HepG2 (cell line): ENCODE measurements at regions of chr11 and their contacts with region 1.

Region 1: GRCh38 chr11:62025487-62026105 is 58.2 kb upstream of the FTH1 start:
- DNase-seq: peak; percentile 87
- ATAC-seq: peak; percentile 88
- H3K4me3 ChIP-seq: peak overlapping the region; percentile 15 to 53 (median 38); a peak in 5 of 6 replicates
- H3K27ac ChIP-seq: peak overlapping the region; percentile 66
- H3K4me1 ChIP-seq: peaks cover 47% of the 10 kb centered on the region
- H3K27me3 ChIP-seq: no peaks in the 10 kb centered on the region
- CTCF ChIP-seq: no peak
- EP300 ChIP-seq: peak; percentile 60 to 67; a peak in 3 of 4 replicates
- POLR2A ChIP-seq: no peak
- RAD21 ChIP-seq: no peak

Region 2: DNA sequence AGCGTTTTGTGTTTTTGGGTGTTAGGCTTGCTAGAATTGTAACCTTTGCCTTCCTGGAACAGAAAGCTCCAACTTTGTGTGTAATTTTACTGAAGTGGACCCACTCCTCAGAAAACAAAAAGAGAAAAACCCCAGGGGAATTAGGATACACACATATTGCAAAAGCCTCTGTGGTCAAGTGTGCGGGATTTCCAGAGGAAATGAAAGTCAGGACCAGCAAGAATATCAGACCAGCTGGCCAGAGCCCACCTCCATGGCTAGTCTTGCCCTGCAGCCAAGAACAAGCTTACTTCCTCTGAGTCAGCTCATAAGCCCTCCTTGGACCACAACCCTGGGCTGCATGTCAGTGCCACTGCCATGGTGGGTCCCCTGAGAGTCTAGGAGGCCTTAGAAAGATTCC is 21.1 kb before region 1 on chr11:
- CTCF ChIA-PET with region 1: interaction called, 4 read pairs
- POLR2A ChIA-PET with region 1: interaction called, 24 read pairs
- in situ Hi-C with region 1: no loop called
- intact Hi-C with region 1: no loop called
- DNase-seq: no peak
- ATAC-seq: no peak
- H3K4me3 ChIP-seq: no peak overlapping the region
- H3K27ac ChIP-seq: peak overlapping the region; percentile 26
- H3K4me1 ChIP-seq: peaks cover 67% of the 10 kb centered on the region
- H3K27me3 ChIP-seq: no peaks in the 10 kb centered on the region
- CTCF ChIP-seq: no peak
- EP300 ChIP-seq: no peak
- POLR2A ChIP-seq: no peak
- RAD21 ChIP-seq: no peak

Region 3: DNA sequence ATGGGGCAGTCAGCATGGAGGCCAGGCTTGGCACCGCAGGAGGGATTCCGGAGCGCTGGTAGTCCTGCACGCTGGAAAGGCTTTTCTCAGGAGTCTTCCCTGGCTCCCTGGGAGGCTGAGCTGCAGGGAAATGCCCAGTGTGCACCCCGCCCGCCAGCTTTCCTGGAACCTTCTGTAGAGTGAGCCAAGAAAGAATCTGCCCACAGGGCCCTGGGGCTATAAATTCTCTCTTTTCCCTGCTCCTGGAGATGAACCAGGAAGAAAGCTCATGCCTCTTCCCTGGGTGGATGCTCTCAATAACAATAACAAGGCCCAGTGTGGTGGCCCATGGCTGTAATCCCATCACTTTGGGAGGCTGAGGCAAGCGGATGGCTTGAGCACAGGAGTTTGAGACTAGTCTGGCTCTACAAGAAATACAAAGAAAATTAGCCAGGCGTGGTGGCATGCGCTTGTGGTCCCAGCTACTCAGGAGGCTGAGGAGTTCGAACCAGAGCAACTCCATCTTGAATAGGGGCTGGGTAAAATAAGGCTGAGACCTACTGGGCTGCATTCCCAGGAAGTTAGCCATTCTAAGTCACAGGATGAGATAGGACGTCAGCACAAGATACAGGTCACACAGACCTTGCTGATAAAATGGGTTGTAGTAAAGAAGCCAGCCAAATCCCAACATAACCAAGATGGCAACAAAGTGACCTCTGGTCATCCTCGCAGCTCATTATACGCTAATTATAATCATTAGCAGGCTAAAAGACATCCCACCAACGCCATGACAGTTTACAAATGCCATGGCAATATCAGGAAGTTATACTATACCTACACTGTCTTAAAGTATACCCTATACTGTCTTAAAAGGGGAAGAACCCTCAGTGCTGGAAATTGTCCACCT is 11.8 kb before region 1 on chr11:
- CTCF ChIA-PET with region 1: no interaction called
- POLR2A ChIA-PET with region 1: interaction called, 10 read pairs
- in situ Hi-C with region 1: no loop called
- intact Hi-C with region 1: no loop called
- DNase-seq: no peak
- ATAC-seq: no peak
- H3K4me3 ChIP-seq: no peak overlapping the region
- H3K27ac ChIP-seq: no peak overlapping the region
- H3K4me1 ChIP-seq: peaks cover 74% of the 10 kb centered on the region
- H3K27me3 ChIP-seq: no peaks in the 10 kb centered on the region
- CTCF ChIP-seq: no peak
- EP300 ChIP-seq: no peak
- POLR2A ChIP-seq: no peak
- RAD21 ChIP-seq: no peak

Region 4: DNA sequence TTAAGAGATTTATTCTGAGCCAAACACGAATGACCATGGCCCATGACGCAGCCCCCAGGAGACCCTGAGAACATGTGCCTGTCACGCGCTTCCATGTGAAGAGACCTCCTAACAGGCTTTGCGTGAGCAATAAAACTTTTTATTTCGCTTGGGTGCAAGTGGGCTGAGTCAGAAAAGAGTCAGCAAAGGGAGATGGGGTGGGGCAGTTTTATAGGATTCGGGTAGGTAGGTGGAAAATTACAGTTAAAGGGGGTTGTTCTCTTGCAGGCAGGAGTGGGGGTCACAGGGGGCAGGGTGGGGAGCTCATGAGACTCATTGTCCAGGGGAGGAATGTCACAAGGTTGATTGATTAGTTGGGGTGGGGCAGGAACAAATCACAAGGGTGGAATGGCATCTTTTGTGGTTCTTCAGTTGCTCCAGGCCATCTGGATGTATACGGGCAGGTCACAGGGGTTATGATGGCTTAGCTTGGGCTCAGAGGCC is 19.1 kb after region 1 on chr11:
- CTCF ChIA-PET with region 1: no interaction called
- POLR2A ChIA-PET with region 1: no interaction called
- in situ Hi-C with region 1: no loop called
- intact Hi-C with region 1: no loop called
- DNase-seq: no peak
- ATAC-seq: no peak
- H3K4me3 ChIP-seq: no peak overlapping the region
- H3K27ac ChIP-seq: no peak overlapping the region
- H3K4me1 ChIP-seq: peaks cover 46% of the 10 kb centered on the region
- H3K27me3 ChIP-seq: peaks cover 3 to 9% of the 10 kb centered on the region in 2 experiments; a peak in 4 of 5 replicates
- CTCF ChIP-seq: no peak
- EP300 ChIP-seq: no peak
- POLR2A ChIP-seq: no peak
- RAD21 ChIP-seq: no peak

Region 5: GRCh38 chr11:62104816-62105653 is 79.4 kb after region 1 on chr11:
- CTCF ChIA-PET with region 1: no interaction called
- POLR2A ChIA-PET with region 1: no interaction called
- in situ Hi-C with region 1: no loop called
- intact Hi-C with region 1: no loop called
- DNase-seq: no peak
- ATAC-seq: no peak
- H3K4me3 ChIP-seq: 0 out of 6 replicates have a peak overlapping the region, but pooled peaks of 1 of the 3 experiments have one; percentile 6
- H3K27ac ChIP-seq: no peak overlapping the region
- H3K4me1 ChIP-seq: peaks cover 29% of the 10 kb centered on the region
- H3K27me3 ChIP-seq: peaks cover 0 to 6% of the 10 kb centered on the region in 2 experiments; a peak in 2 of 5 replicates
- CTCF ChIP-seq: no peak
- EP300 ChIP-seq: no peak
- POLR2A ChIP-seq: no peak
- RAD21 ChIP-seq: no peak